A673 (cell line): ENCODE measurements at regions of chr3 and their contacts with region 1.

Region 1: DNA sequence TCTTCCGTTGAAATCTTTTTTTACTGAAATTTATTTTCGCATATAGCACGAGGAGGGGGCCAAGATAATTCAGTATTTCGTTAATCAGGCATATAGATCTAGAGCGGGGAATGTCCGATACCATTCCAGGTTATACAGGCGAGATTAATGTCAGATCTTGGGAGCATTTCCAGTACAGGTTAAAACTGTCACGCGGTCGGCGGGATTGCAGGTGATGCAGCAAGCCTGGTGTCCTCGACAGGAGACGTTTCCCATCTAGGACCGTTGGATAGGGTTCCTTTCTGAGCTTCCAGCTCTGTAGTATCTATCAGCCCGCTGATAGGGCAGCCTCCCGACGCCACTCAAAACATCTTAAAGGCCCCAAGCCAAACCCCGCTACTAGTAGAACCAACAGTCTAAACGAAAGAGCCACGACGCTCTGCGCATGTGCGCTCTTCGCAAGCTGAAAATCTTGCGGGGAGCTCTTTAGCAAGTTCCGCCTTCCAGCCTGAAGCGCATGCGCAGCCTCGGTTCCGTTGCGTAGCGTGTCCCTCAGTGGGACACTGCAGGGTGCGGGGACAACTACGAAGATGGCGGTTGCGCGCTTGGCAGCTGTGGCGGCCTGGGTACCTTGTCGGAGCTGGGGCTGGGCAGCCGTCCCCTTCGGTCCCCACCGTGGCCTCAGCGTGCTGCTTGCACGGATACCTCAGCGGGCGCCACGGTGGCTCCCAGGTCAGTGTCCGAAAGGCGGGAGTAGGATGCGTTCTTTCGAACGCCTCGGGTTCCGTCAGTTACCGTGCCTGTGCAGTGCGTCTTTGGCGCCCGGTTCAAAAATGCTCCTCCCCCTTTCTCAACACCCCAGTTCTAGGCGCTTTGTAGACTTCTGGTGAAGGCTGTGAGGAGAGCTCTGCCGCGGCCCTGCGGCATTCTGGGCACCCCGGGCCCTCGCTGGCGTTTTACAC is at the start of gene ABHD10:
- DNase-seq: peak; percentile 99
- H3K4me3 ChIP-seq: peak within 1 kb of the TSS; percentile 61
- H3K27ac ChIP-seq: peak within 1 kb of the TSS; percentile 83
- H3K4me1 ChIP-seq: peaks cover 7% of the 10 kb centered on the region
- H3K27me3 ChIP-seq: no peaks in the 10 kb centered on the region
- CTCF ChIP-seq: no peak
- total RNA-seq, gene ABHD10: 39.7 and 40.7 TPM in 2 replicates

Region 2: GRCh38 chr3:112124907-112125607 is 146.3 kb after region 1 on chr3:
- CTCF ChIA-PET with region 1: no interaction called
- POLR2A ChIA-PET with region 1: interaction called, 18 read pairs
- intact Hi-C with region 1: no loop called
- DNase-seq: no peak
- H3K4me3 ChIP-seq: no peak overlapping the region
- H3K27ac ChIP-seq: no peak overlapping the region
- H3K4me1 ChIP-seq: no peaks in the 10 kb centered on the region
- H3K27me3 ChIP-seq: no peaks in the 10 kb centered on the region
- CTCF ChIP-seq: no peak